Ascending aorta (tissue), 2 donors: ENCODE measurements at regions of chr9 and their contacts with region 1.

Region 1: GRCh38 chr9:76873056-76873792 is 32.7 kb downstream of the PRUNE2 start:
- DNase-seq: no peak
- H3K4me3 ChIP-seq: no peak overlapping the region
- H3K27ac ChIP-seq: peak overlapping the region; percentile 84 to 96
- H3K4me1 ChIP-seq: peaks cover 8 to 73% of the 10 kb centered on the region in 2 donors
- H3K27me3 ChIP-seq: no peaks in the 10 kb centered on the region
- CTCF ChIP-seq: no peak

Region 2: DNA sequence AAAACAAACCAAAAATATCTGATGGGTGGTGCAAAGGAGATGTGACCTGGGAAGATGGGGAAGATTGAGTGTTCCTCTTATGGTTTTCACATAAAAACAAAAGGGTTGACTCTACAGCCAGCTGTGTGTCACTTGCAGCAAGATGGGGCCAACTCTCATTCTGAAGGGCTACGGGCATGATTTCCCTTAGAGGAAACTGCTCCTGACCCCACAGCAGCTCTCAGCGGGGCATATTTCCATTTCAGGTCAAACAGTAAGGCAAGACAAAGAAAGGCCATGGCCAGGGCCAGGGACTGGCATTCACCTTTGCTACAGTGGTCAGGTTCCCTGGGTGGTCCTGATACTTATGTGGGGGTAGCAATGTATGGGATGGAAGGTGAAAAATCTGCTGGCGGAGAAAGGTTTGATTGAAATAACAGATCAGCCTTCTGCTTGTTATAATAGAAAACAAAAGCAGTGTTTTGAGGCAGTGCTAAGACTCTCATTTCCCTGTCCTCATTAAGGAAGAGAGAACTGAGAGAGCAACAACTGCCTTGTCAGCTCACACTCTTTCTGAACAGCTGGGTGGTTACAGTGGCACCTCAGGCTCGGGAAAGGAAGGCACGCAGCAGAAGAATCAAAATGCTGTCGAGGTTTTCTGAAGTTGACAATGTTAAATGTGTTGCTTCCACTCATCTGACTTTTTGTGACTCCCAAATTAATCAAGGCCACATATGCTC is 229.7 kb before region 1 on chr9:
- intact Hi-C with region 1: no loop called
- DNase-seq: no peak
- H3K4me3 ChIP-seq: no peak overlapping the region
- H3K27ac ChIP-seq: peak overlapping the region in 1 of 2 donors; percentile 20
- H3K4me1 ChIP-seq: peaks cover 2 to 5% of the 10 kb centered on the region in 2 donors
- H3K27me3 ChIP-seq: no peaks in the 10 kb centered on the region
- CTCF ChIP-seq: no peak

Region 3: GRCh38 chr9:76818271-76818670 is 55.0 kb before region 1 on chr9:
- intact Hi-C with region 1: loop called (anchors 5 kb)
- DNase-seq: peak; percentile 82 to 96
- H3K4me3 ChIP-seq: no peak overlapping the region
- H3K27ac ChIP-seq: peak overlapping the region; percentile 84 to 90
- H3K4me1 ChIP-seq: peaks cover 3 to 24% of the 10 kb centered on the region in 2 donors
- H3K27me3 ChIP-seq: no peaks in the 10 kb centered on the region
- CTCF ChIP-seq: no peak

Region 4: DNA sequence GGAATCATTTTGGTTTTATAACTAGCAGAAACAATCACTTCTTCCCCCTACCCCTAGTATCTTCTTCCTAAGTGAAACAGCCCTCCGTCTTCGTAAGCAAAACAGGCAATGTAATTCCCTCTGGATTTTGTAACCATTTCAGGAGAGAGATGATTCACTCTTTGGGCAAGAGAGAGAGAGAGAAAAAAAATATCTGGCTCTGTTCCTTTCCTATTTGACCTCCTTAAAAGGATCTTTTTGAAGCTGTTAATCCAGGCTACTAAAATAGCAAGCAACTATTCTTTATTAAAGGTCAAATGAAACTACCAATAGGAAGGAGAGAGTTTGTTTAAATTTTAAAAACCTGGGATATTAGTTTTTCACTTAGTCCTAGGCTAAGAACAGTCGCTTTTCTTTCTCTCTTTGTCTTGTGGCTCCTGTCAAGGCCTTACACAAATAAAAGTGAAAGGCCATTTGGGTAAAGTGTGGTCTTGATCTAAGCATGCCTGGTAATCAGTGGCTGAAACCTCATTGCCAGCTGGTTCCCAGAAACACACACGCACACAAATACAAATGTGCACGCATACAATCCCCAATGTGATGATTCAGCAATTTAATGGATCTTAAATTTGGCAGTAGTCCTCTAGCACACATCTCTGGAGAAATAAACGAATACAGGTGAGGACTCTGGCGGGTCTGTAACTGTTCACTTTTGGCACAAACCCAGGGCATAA is 37.5 kb before region 1 on chr9:
- intact Hi-C with region 1: loop called (anchors 2 kb)
- DNase-seq: peak in 1 of 2 donors; percentile 66
- H3K4me3 ChIP-seq: peak overlapping the region; percentile 10 to 28
- H3K27ac ChIP-seq: peak overlapping the region; percentile 86 to 94
- H3K4me1 ChIP-seq: peaks cover 0 to 31% of the 10 kb centered on the region in 2 donors
- H3K27me3 ChIP-seq: no peaks in the 10 kb centered on the region
- CTCF ChIP-seq: no peak

Region 5: DNA sequence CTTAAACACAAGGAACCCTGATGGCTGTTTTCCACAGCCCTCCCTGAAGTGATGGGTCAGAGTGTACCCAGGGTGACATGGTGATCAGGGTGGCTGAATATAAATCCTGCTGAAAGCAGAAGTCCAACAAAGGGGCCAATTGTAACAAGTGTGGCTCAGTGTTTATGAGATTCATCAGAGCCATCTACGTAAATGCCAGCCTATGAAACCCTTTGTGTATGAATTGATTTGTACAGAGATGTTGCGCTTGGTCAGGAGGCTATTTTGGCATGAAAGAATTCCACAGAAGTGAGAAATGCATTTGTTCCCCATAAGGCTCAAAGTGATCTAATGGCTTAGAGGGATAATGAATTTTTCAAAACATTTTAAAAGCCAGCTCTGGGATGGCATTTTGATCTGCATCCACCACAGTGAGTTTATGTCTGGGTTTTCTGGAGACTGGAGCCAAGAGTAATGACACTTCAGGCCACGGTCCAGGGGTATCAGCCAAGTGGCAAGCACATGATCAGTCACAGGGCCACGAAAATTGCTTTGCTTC is 20.2 kb after region 1 on chr9:
- intact Hi-C with region 1: loop called (anchors 2 kb)
- DNase-seq: peak in 1 of 2 donors; percentile 81
- H3K4me3 ChIP-seq: no peak overlapping the region
- H3K27ac ChIP-seq: peak overlapping the region; percentile 78 to 83
- H3K4me1 ChIP-seq: peaks cover 3 to 55% of the 10 kb centered on the region in 2 donors
- H3K27me3 ChIP-seq: no peaks in the 10 kb centered on the region
- CTCF ChIP-seq: no peak

Region 6: GRCh38 chr9:76943054-76943453 is 69.8 kb after region 1 on chr9:
- intact Hi-C with region 1: no loop called
- DNase-seq: no peak
- H3K4me3 ChIP-seq: no peak overlapping the region
- H3K27ac ChIP-seq: no peak overlapping the region
- H3K4me1 ChIP-seq: no peaks in the 10 kb centered on the region
- H3K27me3 ChIP-seq: no peaks in the 10 kb centered on the region
- CTCF ChIP-seq: no peak

Region 7: DNA sequence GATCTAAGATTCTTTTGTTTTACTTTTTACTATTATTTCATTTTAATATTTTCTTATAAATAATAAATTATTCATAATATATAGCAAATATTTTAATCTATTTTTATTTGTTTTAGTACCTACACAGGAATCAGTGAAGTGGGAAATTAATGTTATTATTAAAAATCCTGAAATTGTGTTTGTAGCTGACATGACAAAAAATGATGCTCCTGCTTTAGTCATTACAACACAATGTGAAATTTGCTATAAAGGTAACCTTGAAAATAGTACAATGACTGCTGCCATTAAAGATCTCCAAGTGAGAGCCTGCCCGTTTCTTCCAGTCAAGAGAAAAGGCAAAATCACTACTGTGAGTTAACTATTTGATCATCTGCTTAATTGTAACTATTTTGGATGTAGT is 442.8 kb after region 1 on chr9:
- intact Hi-C with region 1: no loop called
- DNase-seq: no peak
- H3K4me3 ChIP-seq: no peak overlapping the region
- H3K27ac ChIP-seq: no peak overlapping the region
- H3K4me1 ChIP-seq: no peaks in the 10 kb centered on the region
- H3K27me3 ChIP-seq: no peaks in the 10 kb centered on the region
- CTCF ChIP-seq: no peak